Mucosa of descending colon (tissue), 3 donors: ENCODE measurements at regions of chr2 and their contacts with region 1.

Region 1: DNA sequence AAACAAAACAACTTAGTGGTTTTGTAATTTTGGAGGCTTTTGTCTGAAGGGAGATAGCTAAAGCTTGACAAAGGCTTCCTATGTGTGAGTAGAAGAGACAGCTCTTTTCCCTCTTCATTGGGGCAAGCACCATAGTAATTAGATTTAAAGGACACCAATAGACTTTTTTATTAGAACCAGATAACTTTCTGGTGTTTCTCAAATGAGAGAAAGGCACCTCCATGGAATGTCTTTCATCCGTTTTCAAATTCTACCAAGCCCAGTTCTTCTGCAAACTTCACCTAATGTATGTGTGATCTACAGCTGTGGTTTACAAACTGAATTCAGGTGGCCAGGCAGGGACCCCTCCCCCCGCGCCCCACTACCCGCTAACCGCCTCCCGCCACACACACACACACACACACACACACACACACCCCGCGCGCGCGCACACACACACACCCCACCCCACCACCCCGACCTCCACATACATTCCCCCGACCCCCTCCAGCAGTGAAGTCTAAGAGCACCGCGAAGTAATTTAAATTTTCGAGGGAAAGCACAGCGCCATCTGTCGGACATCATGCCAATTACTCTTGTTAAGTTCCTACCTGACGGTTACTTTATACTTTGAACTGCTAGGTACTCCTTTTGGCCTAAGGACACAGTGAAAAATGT is 31.6 kb upstream of the PPP1R1C start:
- DNase-seq: peak in 2 of 3 donors; percentile 50 to 83
- ATAC-seq: peak; percentile 92
- H3K4me3 ChIP-seq: no peak overlapping the region
- H3K4me1 ChIP-seq: no peaks in the 10 kb centered on the region
- CTCF ChIP-seq: peak; percentile 33

Region 2: GRCh38 chr2:182066400-182067087 is 112.5 kb after region 1 on chr2:
- intact Hi-C with region 1: loop called in 1 of 2 experiments (anchors 10 kb)
- DNase-seq: no peak
- ATAC-seq: no peak
- H3K4me3 ChIP-seq: no peak overlapping the region
- H3K4me1 ChIP-seq: peaks cover 5% of the 10 kb centered on the region
- CTCF ChIP-seq: no peak